ENCODE measurements at regions of chr21 and their contacts with region 1.

Region 1: DNA sequence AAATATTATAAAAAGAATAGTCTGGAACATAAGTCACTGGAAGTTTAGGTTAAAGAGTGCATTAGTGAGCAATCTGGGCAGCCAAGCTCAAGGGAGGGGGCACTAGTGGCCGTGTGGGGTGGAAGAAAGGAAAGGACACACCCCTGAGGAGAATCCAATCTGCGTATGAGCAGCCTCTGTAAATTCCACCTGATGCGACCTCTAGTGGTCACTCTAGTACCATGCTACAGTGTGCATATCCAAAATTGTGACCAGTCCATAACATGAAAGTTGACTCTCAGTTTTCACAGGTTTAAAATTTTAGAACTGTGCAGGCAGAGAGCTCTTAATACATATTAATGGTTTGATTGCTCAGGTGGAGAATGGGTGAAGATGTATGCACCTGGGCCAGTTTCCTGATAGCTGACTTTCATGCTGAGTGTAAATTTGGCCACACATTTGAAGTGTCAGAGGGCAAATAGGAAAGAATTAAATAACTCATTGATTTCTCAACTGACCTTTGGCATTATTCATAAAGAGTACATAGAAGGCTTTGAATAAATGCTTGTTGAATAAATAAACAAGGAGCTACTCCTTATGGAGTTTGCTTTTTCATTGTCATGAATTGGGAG is 105.9 kb upstream of the C21orf91 start:
- DNase-seq: peak in 28 of 42 donors; percentile 11 to 79 (median 48)

Region 2: GRCh38 chr21:17679002-17679600 is 246.0 kb before region 1 on chr21:
- intact Hi-C with region 1: loop called (anchors 10 kb)
- DNase-seq: peak in 10 of 42 donors; percentile 21 to 75 (median 39)

Region 3: DNA sequence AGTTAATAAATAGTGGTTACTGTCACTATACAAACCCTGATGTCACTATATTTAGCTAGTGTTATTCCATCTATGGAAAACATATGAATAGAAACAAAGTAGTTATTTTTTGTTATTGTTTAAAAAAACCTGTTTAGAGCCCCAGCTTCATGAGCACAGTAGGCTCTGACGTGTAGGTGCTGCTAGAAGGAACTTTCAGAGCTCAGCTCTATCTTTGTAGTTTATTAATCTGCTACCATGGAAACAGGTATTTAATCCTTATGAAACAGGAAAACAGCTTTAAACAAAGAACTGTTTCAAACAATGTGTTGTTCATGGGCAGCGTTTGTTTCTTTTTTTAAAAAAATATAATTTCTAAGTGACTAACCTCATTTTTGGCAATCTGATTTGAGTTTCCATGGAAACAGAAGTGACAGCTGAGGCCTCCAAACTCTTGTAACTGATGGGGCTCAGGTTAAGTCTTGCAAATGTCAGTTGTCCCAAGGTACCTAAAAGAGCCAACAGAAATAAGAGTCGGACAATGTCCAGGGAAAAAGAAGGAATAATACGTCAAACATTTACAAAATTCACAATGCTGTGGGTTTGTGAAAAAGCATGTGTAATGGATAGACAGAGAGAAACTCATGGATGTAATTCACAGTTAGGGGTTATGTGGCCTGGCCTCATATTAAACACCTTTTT is 56.1 kb after region 1 on chr21:
- intact Hi-C with region 1: no loop called
- DNase-seq: no peak

Measured in head of caudate nucleus (tissue), 42 donors.